Common myeloid progenitor, CD34-positive (primary cell): ENCODE measurements at regions of chr7 and their contacts with region 1.

Region 1: DNA sequence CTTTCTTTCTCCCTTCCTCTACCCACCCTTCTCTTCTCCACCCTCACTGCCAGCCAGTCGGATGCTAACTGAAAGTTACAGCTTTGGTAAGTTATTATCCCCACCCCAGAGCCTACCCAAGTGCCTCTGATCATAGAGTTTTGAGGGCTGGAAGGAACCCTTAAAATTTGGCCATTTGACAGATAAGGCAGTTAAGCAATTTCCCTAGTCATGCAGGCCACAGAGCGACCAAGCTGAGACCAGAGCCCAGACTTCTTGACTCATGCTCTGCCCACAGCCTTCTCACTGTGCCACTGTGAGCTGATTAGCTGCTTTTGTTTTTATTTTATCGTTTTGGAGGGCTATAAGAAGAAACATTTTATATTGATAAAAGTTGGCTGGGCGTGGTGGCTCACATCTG is 17.2 kb downstream of the SAP25 start:
- DNase-seq: peak; percentile 60 to 84 (median 83)
- H3K4me3 ChIP-seq: no peak overlapping the region
- H3K27ac ChIP-seq: peak overlapping the region in 1 of 2 experiments; percentile 68
- H3K4me1 ChIP-seq: peaks cover 0 to 11% (median 10%) of the 10 kb centered on the region in 4 experiments
- H3K27me3 ChIP-seq: no peaks in the 10 kb centered on the region

Region 2: GRCh38 chr7:100478966-100479665 is 77.4 kb before region 1 on chr7 and contains the start of gene TSC22D4:
- CTCF ChIA-PET with region 1: interaction called, 26 read pairs
- POLR2A ChIA-PET with region 1: no interaction called
- DNase-seq: peak; percentile 91 to 97 (median 96)
- H3K4me3 ChIP-seq: peak within 1 kb of the TSS; percentile 62 to 98 (median 92)
- H3K27ac ChIP-seq: peak within 1 kb of the TSS; percentile 70 to 89
- H3K4me1 ChIP-seq: peaks cover 2 to 50% (median 42%) of the 10 kb centered on the region in 4 experiments
- H3K27me3 ChIP-seq: no peaks in the 10 kb centered on the region

Region 3: GRCh38 chr7:100538654-100539435 is 17.7 kb before region 1 on chr7 and contains the start of gene AGFG2:
- CTCF ChIA-PET with region 1: interaction called, 220 read pairs
- POLR2A ChIA-PET with region 1: no interaction called
- DNase-seq: peak; percentile 99 to 100 (median 99)
- H3K4me3 ChIP-seq: peak within 1 kb of the TSS; percentile 37 to 84 (median 75)
- H3K27ac ChIP-seq: peak within 1 kb of the TSS in 1 of 2 experiments; percentile 44
- H3K4me1 ChIP-seq: peaks cover 4 to 18% (median 14%) of the 10 kb centered on the region in 4 experiments
- H3K27me3 ChIP-seq: no peaks in the 10 kb centered on the region

Region 4: GRCh38 chr7:100545360-100546128 is 11.0 kb before region 1 on chr7:
- CTCF ChIA-PET with region 1: interaction called, 220 read pairs
- POLR2A ChIA-PET with region 1: no interaction called
- DNase-seq: peak; percentile 55 to 86 (median 78)
- H3K4me3 ChIP-seq: no peak overlapping the region
- H3K27ac ChIP-seq: no peak overlapping the region
- H3K4me1 ChIP-seq: peaks cover 4 to 57% (median 36%) of the 10 kb centered on the region in 4 experiments
- H3K27me3 ChIP-seq: no peaks in the 10 kb centered on the region

Region 5: DNA sequence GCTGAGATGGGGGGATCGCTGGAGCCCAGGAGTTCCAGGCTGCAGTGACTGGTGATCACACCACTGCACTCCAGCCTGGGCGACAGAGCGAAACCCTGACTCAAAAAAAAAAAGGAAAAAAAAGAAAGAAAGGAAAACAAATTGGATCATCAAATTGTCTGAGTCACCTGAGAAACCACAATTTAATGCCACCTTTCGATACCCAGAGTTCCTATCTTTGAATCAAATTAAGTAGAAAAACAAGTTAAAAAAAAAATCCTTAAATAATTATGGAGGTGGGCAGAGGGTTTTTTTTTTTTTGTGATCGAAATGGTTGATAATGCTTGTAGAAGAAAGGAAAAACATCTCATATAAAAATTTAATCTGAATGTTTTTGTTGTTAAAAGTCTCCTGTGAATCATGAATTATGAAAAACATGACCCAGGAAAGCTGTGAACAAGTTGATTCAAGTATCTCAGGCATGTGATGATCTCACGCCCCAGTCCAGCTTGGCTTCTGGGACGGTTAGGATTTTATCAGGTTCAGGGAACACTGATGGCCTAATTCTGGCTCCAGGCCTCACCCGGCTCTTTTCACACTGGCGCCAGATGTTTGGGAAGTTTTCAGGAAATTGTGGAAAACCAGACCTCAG is 1235.6 kb after region 1 on chr7:
- CTCF ChIA-PET with region 1: no interaction called
- POLR2A ChIA-PET with region 1: no interaction called
- DNase-seq: no peak
- H3K4me3 ChIP-seq: no peak overlapping the region
- H3K27ac ChIP-seq: no peak overlapping the region
- H3K4me1 ChIP-seq: no peaks in the 10 kb centered on the region
- H3K27me3 ChIP-seq: no peaks in the 10 kb centered on the region